Panc1 (cell line): ENCODE measurements at regions of chr1 and their contacts with region 1.

Region 1: GRCh38 chr1:228045871-228046270 is 36.6 kb upstream of the ARF1 start:
- DNase-seq: no peak
- ATAC-seq: no peak
- H3K4me3 ChIP-seq: no peak overlapping the region
- H3K27ac ChIP-seq: no peak overlapping the region
- H3K4me1 ChIP-seq: peaks cover 3% of the 10 kb centered on the region; the same call in 1 of the 2 replicates
- H3K27me3 ChIP-seq: no peaks in the 10 kb centered on the region
- CTCF ChIP-seq: no peak

Region 2: DNA sequence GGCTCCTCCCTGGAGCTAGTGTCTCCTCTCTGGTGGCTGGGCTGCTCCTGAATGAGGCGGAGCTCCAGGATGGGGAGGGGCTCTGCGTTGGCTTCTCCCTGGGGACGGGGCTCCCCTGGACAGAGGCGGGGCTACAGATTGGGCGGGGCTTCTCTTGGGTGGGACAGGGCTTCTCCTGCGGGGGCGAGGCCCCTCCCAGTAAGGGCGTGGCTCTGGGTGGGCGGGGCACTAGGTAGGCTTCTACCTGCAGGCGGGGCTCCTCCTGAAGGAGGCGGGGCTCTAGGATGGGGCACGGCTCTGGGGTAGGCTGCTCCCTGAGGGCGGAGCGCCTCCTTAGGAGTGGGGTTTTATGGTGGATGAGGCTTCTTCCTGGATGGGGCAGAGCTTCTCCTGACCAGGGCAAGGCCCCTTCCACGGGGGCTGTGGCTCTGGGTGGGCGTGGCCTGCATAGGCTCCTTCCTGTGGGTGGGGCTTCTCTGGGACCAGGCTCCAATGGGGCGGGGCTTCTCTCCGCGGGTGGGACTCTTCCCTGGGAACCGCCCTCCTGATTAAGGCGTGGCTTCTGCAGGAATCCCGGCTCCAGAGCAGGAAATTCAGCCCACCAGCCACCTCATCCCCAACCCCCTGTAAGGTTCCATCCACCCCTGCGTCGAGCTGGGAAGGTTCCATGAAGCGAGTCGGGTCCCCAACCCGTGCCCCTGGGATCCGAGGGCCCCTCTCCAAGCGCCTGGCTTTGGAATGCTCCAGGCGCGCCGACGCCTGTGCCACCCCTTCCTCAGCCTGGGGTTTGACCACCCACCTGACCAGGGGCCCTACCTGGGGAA is 14.0 kb after region 1 on chr1:
- CTCF ChIA-PET with region 1: interaction called, 11 read pairs
- POLR2A ChIA-PET with region 1: no interaction called
- in situ Hi-C with region 1: no loop called
- intact Hi-C with region 1: no loop called
- DNase-seq: no peak
- ATAC-seq: peak; percentile 52
- H3K4me3 ChIP-seq: peak overlapping the region; percentile 26 to 46
- H3K27ac ChIP-seq: no peak overlapping the region
- H3K4me1 ChIP-seq: peaks cover 3% of the 10 kb centered on the region; the same call in 1 of the 2 replicates
- H3K27me3 ChIP-seq: peaks cover 6% of the 10 kb centered on the region; the same call in 1 of the 2 replicates
- CTCF ChIP-seq: no peak